Breast epithelium (tissue), 4 donors: ENCODE measurements at regions of chr19 and their contacts with region 1.

Region 1: GRCh38 chr19:54335979-54336892 is 2.7 kb downstream of the LILRA4 start:
- DNase-seq: no peak
- H3K4me3 ChIP-seq: no peak overlapping the region
- H3K27ac ChIP-seq: no peak overlapping the region
- H3K4me1 ChIP-seq: no peaks in the 10 kb centered on the region
- H3K27me3 ChIP-seq: peaks cover 0 to 29% of the 10 kb centered on the region in 2 donors
- CTCF ChIP-seq: no peak
- POLR2A ChIP-seq: no peak

Region 2: DNA sequence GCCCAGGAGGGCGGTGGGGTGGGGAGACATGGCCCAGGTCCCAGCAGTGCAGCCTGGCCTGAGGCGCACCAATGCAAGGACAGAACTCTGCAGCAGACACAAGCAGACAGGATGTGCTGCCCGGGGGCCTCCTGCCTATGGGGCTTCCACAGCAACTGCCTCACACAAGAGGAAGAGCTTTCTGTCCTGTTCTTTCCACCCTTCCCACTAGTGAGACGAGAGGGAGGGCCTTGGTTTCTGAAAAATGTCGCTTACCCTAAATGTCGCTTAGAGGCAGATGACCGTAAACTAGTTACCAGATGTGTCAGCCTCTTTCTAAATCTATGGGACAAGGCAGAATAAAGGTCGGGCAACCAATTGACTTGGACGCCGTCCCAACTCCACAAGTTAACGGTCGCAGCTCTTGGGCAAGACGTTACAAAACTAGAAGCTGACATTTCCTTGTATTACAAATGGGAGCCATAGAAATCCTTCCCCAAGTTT is 28.6 kb after region 1 on chr19 and contains the start of gene LAIR1:
- intact Hi-C with region 1: loop called (anchors 2 kb)
- DNase-seq: no peak
- H3K4me3 ChIP-seq: peak within 1 kb of the TSS; percentile 24 to 39 (median 29)
- H3K27ac ChIP-seq: no peak within 1 kb of the TSS
- H3K4me1 ChIP-seq: no peaks in the 10 kb centered on the region
- H3K27me3 ChIP-seq: peaks cover 0 to 4% of the 10 kb centered on the region in 2 donors
- CTCF ChIP-seq: no peak
- POLR2A ChIP-seq: no peak
- total RNA-seq, gene LAIR1: 11.8 to 44.5 (median 23.1) TPM